ENCODE measurements at regions of chr6 and their contacts with region 1.

Region 1: DNA sequence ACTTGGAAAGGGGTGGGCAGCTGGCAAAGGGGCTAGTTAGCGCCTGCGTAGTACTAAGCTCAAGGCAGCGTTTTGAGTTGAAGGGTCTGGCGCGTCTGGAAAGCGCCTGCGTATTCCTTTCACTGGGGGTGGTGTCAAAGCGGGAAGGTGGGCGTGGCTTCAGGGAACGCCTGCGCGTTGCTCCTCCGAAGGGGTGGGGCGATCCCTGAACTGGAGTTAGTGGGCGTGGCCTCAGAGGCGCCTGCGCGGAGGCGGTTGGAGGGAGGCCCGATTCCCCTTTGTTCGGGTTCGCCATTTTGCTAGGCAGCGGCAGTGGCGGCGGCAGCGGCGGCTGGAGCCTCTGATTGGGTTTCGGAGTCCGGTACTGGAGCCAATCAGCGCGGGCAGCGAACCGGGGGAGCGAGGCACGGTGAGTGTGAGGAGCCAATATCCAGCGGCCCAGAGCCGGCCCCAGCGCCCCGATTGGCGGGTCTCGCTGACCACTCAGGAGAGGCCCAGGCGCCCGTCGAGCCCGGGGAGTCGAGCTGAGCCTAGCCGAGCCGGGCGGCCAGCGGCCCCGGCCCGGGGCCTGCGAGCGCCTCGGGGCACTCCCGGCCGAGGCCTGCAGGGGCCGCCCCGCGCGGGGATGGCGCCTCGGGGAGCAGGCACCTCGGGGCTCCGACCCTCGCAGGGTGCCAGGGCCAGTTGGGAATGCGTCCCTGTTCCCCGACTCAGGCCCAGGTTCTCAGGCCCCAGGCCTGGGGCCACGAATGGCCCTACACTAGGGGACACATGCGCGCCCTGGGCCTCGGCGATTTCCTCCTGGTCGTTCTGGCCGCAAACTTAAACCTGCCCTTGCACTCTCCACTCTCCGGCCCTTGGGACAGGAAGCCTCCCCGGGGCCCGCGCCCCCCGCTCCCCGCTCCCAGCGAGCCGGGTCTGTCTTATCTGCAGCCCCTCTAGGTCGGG is at the start of gene NFYA:
- DNase-seq: peak; percentile 100
- H3K4me3 Mint-ChIP-seq: peak within 1 kb of the TSS; percentile 93
- H3K27ac Mint-ChIP-seq: peak within 1 kb of the TSS; percentile 99
- H3K4me1 Mint-ChIP-seq: peaks cover 66% of the 10 kb centered on the region
- H3K27me3 Mint-ChIP-seq: no peaks in the 10 kb centered on the region
- total RNA-seq, gene NFYA: 26.2 to 29.8 TPM

Region 2: DNA sequence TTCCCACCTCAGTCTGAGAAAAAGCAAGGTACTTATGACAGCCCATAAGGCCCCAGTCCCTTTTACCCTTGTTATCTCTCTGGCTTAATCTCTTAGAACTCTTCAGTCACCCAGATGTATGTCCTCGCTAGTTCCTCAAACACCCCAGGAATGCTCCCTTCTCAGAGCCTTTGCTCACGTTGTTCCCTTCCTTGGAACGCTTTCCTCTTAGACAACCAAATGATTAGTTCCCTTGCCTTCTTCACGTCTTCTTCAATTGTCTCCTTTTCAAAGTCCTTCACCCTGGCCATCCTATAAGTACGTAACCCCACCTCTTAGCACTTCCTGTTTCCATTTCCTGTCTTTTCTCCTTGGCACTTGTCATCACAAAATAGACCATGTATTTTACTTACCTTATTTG is 21.1 kb before region 1 on chr6:
- CTCF ChIA-PET with region 1: interaction called, 6 read pairs
- POLR2A ChIA-PET with region 1: interaction called, 23 read pairs
- DNase-seq: no peak
- H3K4me3 Mint-ChIP-seq: no peak overlapping the region
- H3K27ac Mint-ChIP-seq: peak overlapping the region; percentile 71
- H3K4me1 Mint-ChIP-seq: peaks cover 17% of the 10 kb centered on the region
- H3K27me3 Mint-ChIP-seq: no peaks in the 10 kb centered on the region

Region 3: DNA sequence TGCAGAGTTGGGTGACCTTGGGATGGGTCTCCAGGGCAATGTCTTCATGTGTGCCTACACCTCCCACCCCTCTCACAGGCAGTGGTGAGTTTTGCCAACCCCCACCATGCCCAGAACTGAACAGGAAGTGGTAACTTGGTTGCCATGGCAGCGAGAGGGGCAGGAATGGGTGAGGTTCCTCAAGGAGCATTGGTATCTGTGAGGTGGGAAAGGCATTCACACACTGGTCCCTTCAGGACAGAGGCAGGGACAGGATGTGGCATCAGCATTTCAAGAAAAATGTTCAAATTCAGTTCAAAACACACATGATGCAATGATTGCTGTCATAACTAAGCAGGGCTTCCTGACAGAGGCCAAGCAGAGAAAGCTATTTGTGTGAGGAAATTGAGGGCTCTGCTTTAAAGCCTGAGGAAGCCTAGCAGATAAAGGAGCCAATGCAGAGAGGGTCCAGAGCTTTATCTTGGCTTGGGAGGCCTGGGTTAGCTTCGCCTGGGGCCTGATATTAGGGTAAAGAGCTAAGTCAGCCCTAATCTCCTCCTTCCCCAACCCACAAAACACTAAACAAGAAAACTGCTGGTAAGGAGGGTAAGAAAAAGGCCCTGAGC is 127.4 kb after region 1 on chr6:
- CTCF ChIA-PET with region 1: interaction called, 9 read pairs
- POLR2A ChIA-PET with region 1: interaction called, 22 read pairs
- DNase-seq: peak; percentile 77
- H3K4me3 Mint-ChIP-seq: peak overlapping the region; percentile 67
- H3K27ac Mint-ChIP-seq: peak overlapping the region; percentile 95
- H3K4me1 Mint-ChIP-seq: peaks cover 67% of the 10 kb centered on the region
- H3K27me3 Mint-ChIP-seq: no peaks in the 10 kb centered on the region

Measured in activated CD4-positive, alpha-beta memory T cell treated with anti-CD3 and anti-CD28 coated beads, Interleukin-2, amount 10 ng/mL, durations not matched to agents 7 days and 5 days (primary cell).